ENCODE measurements at regions of chr17 and their contacts with region 1.

Region 1: DNA sequence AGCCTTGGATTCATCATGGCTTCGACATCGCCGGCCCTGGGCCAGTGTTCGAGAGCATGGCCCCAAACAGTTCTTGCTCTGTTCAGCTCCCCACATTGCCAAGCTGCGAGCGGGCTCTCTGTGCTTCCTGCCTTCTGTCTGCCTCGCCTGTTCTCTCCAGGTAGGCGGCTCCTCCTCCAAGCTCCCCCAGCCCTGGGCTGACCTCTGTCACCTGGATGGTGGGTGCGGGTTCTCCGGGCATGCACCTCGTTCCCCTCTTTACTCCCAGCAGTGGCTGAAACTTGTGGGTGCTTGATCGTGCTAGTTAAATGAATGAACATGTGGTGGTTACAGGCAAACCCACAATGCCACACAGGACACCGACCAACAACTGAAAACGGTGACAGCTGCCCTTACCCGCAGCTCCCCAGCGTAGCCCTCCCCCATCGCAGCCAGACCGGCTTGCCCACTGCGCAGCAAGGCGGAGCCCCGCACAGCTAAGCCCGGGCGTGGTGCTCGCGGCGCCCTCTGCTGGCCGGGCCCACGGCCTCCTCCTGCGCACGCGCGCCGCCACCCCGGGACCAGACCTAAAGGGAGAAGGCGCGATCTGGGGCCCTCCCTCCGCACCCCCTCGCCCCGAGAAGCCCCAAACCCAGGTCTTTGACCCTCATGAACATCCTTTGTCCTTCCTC is 23.0 kb upstream of the EIF1 start:
- DNase-seq: peak; percentile 83
- H3K4me3 ChIP-seq: peak overlapping the region in 2 of 3 experiments; percentile 34 to 37
- H3K27ac ChIP-seq: peak overlapping the region; percentile 68
- H3K4me1 ChIP-seq: peaks cover 47% of the 10 kb centered on the region
- H3K27me3 ChIP-seq: no peaks in the 10 kb centered on the region
- CTCF ChIP-seq: peak; percentile 87 to 92

Region 2: DNA sequence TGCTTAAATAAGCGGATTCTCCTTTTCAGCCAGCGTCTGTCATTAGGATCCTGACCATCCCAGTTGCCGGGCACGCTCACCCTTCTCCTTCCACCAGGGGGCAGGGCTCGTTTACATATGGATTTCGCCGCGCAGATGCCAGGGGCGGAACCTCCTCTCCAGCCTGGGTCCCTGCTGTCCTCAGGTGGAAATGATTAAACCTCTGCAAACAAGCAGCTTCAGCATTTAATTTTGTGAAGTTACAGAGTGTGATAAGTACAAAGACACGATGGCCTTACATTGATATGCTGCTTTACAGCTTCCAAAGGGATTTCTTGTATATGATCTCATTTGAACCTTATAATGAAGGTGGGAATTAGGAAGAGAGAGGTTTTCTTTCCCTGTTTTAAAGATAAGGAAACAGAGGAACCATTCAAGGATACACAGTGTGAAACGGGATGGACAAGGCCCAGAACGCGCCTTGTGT is 862.1 kb before region 1 on chr17:
- CTCF ChIA-PET with region 1: no interaction called
- dilution Hi-C with region 1: no loop called
- in situ Hi-C with region 1: loop called in 1 of 2 experiments (anchors 10 kb)
- intact Hi-C with region 1: loop called (anchors 1 kb)
- DNase-seq: peak; percentile 65
- H3K4me3 ChIP-seq: no peak overlapping the region
- H3K27ac ChIP-seq: no peak overlapping the region
- H3K4me1 ChIP-seq: peaks cover 4% of the 10 kb centered on the region
- H3K27me3 ChIP-seq: no peaks in the 10 kb centered on the region
- CTCF ChIP-seq: peak; percentile 89 to 93

Region 3: GRCh38 chr17:41322094-41322902 is 343.4 kb before region 1 on chr17:
- CTCF ChIA-PET with region 1: interaction called, 3 read pairs
- dilution Hi-C with region 1: no loop called
- in situ Hi-C with region 1: loop called (anchors 10 kb)
- intact Hi-C with region 1: loop called (anchors 1 kb)
- DNase-seq: peak; percentile 61
- H3K4me3 ChIP-seq: no peak overlapping the region
- H3K27ac ChIP-seq: peak overlapping the region; percentile 39
- H3K4me1 ChIP-seq: peaks cover 3% of the 10 kb centered on the region
- H3K27me3 ChIP-seq: no peaks in the 10 kb centered on the region
- CTCF ChIP-seq: peak; percentile 95 to 98

Region 4: GRCh38 chr17:41496820-41497408 is 168.8 kb before region 1 on chr17:
- CTCF ChIA-PET with region 1: no interaction called
- dilution Hi-C with region 1: no loop called
- in situ Hi-C with region 1: no loop called
- intact Hi-C with region 1: loop called (anchors 5 kb)
- DNase-seq: peak; percentile 88
- H3K4me3 ChIP-seq: no peak overlapping the region
- H3K27ac ChIP-seq: peak overlapping the region; percentile 52
- H3K4me1 ChIP-seq: peaks cover 49% of the 10 kb centered on the region
- H3K27me3 ChIP-seq: no peaks in the 10 kb centered on the region
- CTCF ChIP-seq: peak; percentile 97

Region 5: DNA sequence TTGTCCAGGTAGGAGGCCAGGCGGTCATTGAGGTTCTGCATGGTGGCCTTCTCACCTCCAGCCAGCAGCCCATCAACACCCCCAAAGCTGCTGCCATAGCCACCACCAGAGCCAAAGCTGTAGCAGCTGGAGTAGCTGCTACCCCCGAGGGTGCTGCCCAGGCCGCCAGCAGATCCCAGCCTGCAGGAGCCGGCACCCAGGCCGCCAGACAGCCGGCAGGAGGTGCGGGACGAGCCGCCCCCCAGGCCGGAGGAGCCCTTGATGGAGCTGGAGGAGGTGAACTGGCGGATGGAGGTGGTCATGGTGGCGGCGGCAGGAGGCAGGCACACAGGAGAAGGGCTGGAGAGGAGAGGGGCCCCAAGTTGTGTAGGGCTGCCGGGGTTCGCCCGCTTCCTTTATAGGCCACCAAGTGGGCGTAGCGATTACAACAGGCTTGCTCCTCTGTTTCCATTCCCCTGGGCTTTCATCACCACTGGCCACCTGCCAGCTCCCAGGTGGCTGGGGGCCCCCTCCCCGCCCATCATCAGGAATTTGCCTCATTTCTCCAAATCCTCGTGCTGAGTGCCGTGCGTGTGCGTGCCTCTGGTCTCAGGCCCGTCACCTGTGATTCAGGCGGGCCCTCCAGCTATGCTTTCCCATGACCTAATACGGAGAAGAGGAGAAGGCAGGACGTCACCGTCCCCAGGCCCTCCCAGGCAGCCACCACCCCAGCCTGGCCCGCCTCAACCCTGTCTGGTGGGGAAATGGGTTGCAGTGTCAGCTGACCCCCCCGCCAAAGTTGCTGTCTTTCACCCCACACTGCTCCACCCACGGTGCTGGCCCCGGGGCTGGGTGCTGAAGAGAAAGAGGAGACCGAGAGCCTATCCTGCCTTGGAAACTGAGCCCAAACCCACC is 41.2 kb before region 1 on chr17 and contains the start of gene KRT17:
- CTCF ChIA-PET with region 1: interaction called, 13 read pairs
- dilution Hi-C with region 1: no loop called
- in situ Hi-C with region 1: no loop called
- intact Hi-C with region 1: no loop called
- DNase-seq: peak; percentile 99
- H3K4me3 ChIP-seq: peak within 1 kb of the TSS; percentile 57 to 86 (median 70)
- H3K27ac ChIP-seq: peak within 1 kb of the TSS; percentile 98
- H3K4me1 ChIP-seq: peaks cover 63% of the 10 kb centered on the region
- H3K27me3 ChIP-seq: no peaks in the 10 kb centered on the region
- CTCF ChIP-seq: peak in 1 of 2 donors; percentile 19
- total RNA-seq, gene KRT17: 10,365 to 24,723 TPM

Region 6: GRCh38 chr17:41688699-41689496 is 23.2 kb after region 1 on chr17 and contains the start of gene EIF1:
- CTCF ChIA-PET with region 1: interaction called, 3 read pairs
- dilution Hi-C with region 1: no loop called
- in situ Hi-C with region 1: no loop called
- intact Hi-C with region 1: loop called (anchors 1 kb)
- DNase-seq: peak; percentile 100
- H3K4me3 ChIP-seq: peak within 1 kb of the TSS; percentile 56 to 76 (median 74)
- H3K27ac ChIP-seq: peak within 1 kb of the TSS; percentile 96
- H3K4me1 ChIP-seq: peaks cover 19% of the 10 kb centered on the region
- H3K27me3 ChIP-seq: no peaks in the 10 kb centered on the region
- CTCF ChIP-seq: no peak
- total RNA-seq, gene EIF1: 78.9 to 981 TPM